Activated B cell treated with CpG ODN at 0.5 μM for 24 hours (primary cell): ENCODE measurements at regions of chr20 and their contacts with region 1.

Region 1: GRCh38 chr20:63495741-63496595 is 2.9 kb downstream of the EEF1A2 start:
- DNase-seq: peak; percentile 73
- ATAC-seq: peak; percentile 74
- H3K4me3 Mint-ChIP-seq: peak overlapping the region; percentile 59
- H3K27ac Mint-ChIP-seq: no peak overlapping the region
- H3K4me1 Mint-ChIP-seq: peaks cover 4% of the 10 kb centered on the region
- H3K27me3 Mint-ChIP-seq: peaks cover 9% of the 10 kb centered on the region
- CTCF ChIP-seq: peak; percentile 58

Region 2: DNA sequence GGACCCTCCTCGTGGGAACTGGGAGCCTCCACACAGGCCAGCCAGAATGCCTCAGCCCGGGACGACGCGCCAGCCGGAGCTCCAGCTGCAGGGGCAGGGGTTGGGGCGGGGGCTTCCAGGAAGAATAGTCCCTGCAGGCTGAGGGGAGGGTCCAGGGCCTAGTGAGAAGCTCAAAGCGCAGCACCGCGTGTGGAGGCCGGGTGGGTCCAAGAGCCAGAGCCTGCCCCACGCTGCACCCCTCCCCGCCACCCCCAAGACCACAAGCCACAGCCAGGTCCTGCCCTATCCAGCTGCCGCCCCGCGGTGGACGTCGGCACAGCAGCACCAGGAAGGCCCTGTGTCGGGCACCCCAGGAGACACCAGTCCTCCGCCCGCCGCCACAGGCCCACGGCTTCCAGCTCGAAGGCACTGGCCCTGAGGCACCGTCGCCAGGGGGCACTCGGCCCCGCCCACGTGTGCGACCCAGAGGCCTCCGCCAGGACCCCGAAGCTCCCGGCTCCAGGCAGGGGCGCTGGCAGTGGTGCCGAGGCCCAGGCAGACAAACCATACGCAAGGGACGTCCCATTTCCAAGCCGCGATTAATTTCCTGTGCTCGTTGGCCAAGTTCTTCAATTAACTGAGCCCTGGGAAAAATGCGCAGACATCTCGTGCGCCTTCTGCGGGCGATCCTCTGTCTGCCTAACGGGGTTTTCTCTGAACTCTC is 43.0 kb before region 1 on chr20:
- CTCF ChIA-PET with region 1: no interaction called
- POLR2A ChIA-PET with region 1: no interaction called
- intact Hi-C with region 1: no loop called
- DNase-seq: no peak
- ATAC-seq: peak; percentile 42
- H3K4me3 Mint-ChIP-seq: no peak overlapping the region
- H3K27ac Mint-ChIP-seq: no peak overlapping the region
- H3K4me1 Mint-ChIP-seq: peaks cover 8% of the 10 kb centered on the region
- H3K27me3 Mint-ChIP-seq: peaks cover 18% of the 10 kb centered on the region
- CTCF ChIP-seq: no peak

Region 3: GRCh38 chr20:63475206-63475605 is 20.8 kb before region 1 on chr20:
- CTCF ChIA-PET with region 1: no interaction called
- POLR2A ChIA-PET with region 1: no interaction called
- intact Hi-C with region 1: no loop called
- DNase-seq: no peak
- ATAC-seq: no peak
- H3K4me3 Mint-ChIP-seq: no peak overlapping the region
- H3K27ac Mint-ChIP-seq: no peak overlapping the region
- H3K4me1 Mint-ChIP-seq: peaks cover 11% of the 10 kb centered on the region
- H3K27me3 Mint-ChIP-seq: peaks cover 39% of the 10 kb centered on the region
- CTCF ChIP-seq: no peak

Region 4: GRCh38 chr20:63544958-63545534 is 49.1 kb after region 1 on chr20:
- CTCF ChIA-PET with region 1: no interaction called
- POLR2A ChIA-PET with region 1: no interaction called
- intact Hi-C with region 1: no loop called
- DNase-seq: no peak
- ATAC-seq: no peak
- H3K4me3 Mint-ChIP-seq: no peak overlapping the region
- H3K27ac Mint-ChIP-seq: no peak overlapping the region
- H3K4me1 Mint-ChIP-seq: peaks cover 58% of the 10 kb centered on the region
- H3K27me3 Mint-ChIP-seq: no peaks in the 10 kb centered on the region
- CTCF ChIP-seq: no peak

Region 5: DNA sequence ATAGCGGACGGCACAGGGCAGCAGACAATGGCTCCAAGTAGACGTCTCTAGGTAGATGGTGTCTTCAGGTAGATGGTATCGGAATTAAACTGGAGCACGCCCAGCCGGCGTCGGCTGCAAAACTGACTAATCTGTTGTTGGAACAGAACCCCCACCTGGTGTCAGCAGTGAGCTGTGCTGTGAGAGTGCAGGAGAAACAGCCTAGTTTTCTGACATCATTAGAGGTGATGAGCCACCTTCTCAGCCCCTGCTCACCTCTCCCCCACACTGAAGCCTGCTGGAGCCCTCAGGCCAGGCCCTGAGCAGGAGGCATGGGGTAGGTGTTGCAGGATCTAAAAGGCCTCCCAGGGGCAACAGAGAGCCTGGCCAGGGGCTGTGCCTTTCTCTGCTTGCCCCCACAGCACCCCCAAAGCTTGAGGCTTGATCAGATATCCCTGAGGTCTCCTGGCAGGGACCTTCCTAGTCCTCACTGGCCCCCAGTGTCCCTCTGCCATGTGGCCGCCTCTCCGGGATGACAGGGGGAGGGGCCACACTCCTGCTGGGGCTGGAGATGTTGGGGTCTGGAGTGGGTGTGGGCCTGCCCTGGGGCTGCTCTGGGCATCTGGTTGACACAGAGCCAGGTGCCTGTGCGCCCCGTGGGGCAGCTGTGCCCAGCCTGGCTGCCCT is 85.0 kb after region 1 on chr20:
- CTCF ChIA-PET with region 1: interaction called, 3 read pairs
- POLR2A ChIA-PET with region 1: no interaction called
- intact Hi-C with region 1: loop called (anchors 1 kb)
- DNase-seq: no peak
- ATAC-seq: peak; percentile 98
- H3K4me3 Mint-ChIP-seq: no peak overlapping the region
- H3K27ac Mint-ChIP-seq: no peak overlapping the region
- H3K4me1 Mint-ChIP-seq: peaks cover 5% of the 10 kb centered on the region
- H3K27me3 Mint-ChIP-seq: peaks cover 2% of the 10 kb centered on the region
- CTCF ChIP-seq: no peak

Region 6: DNA sequence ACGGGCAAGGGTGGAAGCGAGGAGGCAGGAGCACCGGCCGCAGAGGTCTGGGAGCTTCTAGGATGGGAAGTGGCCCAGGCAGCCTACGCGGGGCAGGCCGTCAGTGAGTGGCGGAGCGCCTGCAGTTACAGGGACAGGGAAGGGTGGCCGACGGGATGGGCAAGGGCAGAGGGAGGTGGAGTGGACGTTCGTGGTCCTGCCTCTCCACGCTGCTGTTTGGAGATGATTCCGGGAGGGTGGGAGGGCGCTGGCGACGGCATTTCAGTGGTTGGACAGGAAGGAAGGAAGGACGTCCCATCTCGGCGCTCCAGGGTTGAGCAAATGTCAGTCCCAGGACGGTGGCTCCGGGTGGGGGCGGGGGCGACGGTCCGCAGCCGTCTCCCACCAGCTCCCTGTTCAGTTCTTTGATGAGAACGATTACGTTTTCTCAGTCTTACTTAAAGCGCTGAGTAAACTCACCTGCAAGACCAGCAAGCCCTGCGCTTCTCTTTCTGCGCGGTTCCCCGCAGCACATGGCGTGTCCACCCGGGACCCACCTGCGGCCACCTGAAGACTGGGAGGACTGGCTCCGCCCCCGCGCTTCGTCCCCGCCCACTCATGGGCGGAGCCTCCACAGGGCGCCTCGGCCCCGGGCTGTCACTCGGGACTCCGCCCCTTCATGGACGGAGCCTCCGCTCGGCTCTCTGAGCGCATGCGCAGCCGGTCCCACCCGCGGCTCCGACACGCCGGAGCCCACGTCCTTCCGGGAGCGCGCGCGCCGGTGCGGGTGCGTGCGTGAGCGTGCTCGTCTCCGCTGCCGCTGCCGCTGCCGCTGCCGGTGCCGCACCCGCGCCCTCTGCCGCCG is 398.6 kb after region 1 on chr20 and contains the start of gene DNAJC5:
- CTCF ChIA-PET with region 1: no interaction called
- POLR2A ChIA-PET with region 1: no interaction called
- intact Hi-C with region 1: no loop called
- DNase-seq: peak; percentile 97
- ATAC-seq: peak; percentile 92
- H3K4me3 Mint-ChIP-seq: peak within 1 kb of the TSS; percentile 88
- H3K27ac Mint-ChIP-seq: peak within 1 kb of the TSS; percentile 90
- H3K4me1 Mint-ChIP-seq: peaks cover 45% of the 10 kb centered on the region
- H3K27me3 Mint-ChIP-seq: no peaks in the 10 kb centered on the region
- CTCF ChIP-seq: no peak
- total RNA-seq, gene DNAJC5: 27.5 and 28.6 TPM in 2 replicates